Activated CD4-positive, alpha-beta T cell treated with anti-CD3 and anti-CD28 coated beads for 36 hours (primary cell): ENCODE measurements at regions of chr18 and their contacts with region 1.

Region 1: GRCh38 chr18:9971313-9971920 is 57.6 kb downstream of the VAPA start:
- DNase-seq: peak; percentile 80
- ATAC-seq: peak; percentile 68
- H3K4me3 Mint-ChIP-seq: no peak overlapping the region
- H3K27ac Mint-ChIP-seq: no peak overlapping the region
- H3K4me1 Mint-ChIP-seq: peaks cover 17% of the 10 kb centered on the region
- H3K27me3 Mint-ChIP-seq: peaks cover 28% of the 10 kb centered on the region

Region 2: GRCh38 chr18:10519999-10520935 is 548.9 kb after region 1 on chr18:
- CTCF ChIA-PET with region 1: interaction called, 29 read pairs
- POLR2A ChIA-PET with region 1: no interaction called
- intact Hi-C with region 1: loop called (anchors 1 kb)
- DNase-seq: peak; percentile 83
- ATAC-seq: peak; percentile 92
- H3K4me3 Mint-ChIP-seq: no peak overlapping the region
- H3K27ac Mint-ChIP-seq: no peak overlapping the region
- H3K4me1 Mint-ChIP-seq: peaks cover 16% of the 10 kb centered on the region
- H3K27me3 Mint-ChIP-seq: peaks cover 25% of the 10 kb centered on the region

Region 3: DNA sequence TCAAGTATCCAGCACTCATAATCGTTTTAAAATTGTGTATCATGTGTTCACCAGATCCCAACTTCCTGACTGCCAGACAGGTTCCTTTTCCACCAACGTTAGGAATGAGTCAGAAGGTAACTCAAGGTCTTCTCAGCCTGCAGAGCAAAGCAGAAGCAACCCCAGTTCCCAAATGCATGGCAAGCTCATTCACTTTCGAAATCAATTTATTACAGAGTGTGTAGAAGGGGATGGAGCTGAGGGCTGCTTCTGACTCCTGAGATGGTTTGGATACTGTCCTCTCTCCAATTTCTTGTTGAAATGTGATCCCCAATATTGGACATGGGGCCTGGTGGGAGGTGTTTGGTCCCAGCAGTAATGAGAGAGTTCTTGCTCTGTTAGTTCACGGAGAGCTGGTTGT is 1063.5 kb after region 1 on chr18:
- CTCF ChIA-PET with region 1: no interaction called
- POLR2A ChIA-PET with region 1: no interaction called
- intact Hi-C with region 1: loop called (anchors 5 kb)
- DNase-seq: no peak
- ATAC-seq: no peak
- H3K4me3 Mint-ChIP-seq: no peak overlapping the region
- H3K27ac Mint-ChIP-seq: no peak overlapping the region
- H3K4me1 Mint-ChIP-seq: no peaks in the 10 kb centered on the region
- H3K27me3 Mint-ChIP-seq: peaks cover 2% of the 10 kb centered on the region

Region 4: DNA sequence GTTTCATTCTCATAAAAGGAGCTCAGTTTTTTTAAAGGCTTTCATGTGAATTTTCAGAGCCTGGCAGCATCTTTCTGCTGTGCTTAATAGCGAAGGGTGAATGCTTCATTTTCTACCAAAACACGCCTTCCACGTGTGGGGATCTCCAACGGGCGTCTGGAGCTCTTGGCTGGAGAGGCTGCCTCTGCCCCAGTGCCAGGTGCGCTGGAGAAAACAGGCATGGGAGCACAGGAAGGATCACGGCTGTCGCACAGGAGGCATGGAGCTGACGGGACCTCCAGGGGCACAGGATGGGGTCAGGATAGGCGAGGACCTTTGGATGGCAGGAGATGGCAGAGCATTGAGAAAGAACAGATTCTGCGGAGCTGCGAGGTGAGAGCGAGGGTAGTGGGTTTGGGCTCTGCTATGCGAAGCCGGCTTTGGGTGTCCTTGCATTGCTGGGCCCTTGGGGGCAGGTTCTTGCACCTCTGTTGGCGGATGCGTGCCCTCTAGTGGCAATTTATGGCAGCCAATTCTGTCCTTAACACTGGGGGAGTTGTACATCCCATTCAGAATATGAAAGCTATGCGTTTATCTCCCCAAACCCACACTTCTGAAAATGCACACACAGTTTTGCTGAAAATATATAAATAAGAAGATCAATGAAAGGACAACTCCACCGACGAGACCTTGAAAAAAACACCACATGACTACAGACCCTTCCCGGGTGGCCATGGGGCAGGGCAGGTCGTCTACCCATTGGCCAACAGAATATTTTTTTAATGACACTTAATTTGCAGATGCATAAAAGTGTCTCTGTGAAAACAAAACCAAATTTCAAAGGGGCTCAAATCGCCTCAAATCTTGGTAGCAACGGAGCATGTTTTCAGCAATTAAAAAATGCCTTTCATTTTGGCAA is 1547.6 kb after region 1 on chr18:
- CTCF ChIA-PET with region 1: interaction called, 3 read pairs
- POLR2A ChIA-PET with region 1: no interaction called
- intact Hi-C with region 1: loop called in 1 of 2 experiments (anchors 10 kb)
- DNase-seq: peak; percentile 74
- ATAC-seq: peak; percentile 57
- H3K4me3 Mint-ChIP-seq: no peak overlapping the region
- H3K27ac Mint-ChIP-seq: no peak overlapping the region
- H3K4me1 Mint-ChIP-seq: no peaks in the 10 kb centered on the region
- H3K27me3 Mint-ChIP-seq: no peaks in the 10 kb centered on the region